Sigmoid colon (tissue), 7 donors: ENCODE measurements at regions of chr5 and their contacts with region 1.

Region 1: DNA sequence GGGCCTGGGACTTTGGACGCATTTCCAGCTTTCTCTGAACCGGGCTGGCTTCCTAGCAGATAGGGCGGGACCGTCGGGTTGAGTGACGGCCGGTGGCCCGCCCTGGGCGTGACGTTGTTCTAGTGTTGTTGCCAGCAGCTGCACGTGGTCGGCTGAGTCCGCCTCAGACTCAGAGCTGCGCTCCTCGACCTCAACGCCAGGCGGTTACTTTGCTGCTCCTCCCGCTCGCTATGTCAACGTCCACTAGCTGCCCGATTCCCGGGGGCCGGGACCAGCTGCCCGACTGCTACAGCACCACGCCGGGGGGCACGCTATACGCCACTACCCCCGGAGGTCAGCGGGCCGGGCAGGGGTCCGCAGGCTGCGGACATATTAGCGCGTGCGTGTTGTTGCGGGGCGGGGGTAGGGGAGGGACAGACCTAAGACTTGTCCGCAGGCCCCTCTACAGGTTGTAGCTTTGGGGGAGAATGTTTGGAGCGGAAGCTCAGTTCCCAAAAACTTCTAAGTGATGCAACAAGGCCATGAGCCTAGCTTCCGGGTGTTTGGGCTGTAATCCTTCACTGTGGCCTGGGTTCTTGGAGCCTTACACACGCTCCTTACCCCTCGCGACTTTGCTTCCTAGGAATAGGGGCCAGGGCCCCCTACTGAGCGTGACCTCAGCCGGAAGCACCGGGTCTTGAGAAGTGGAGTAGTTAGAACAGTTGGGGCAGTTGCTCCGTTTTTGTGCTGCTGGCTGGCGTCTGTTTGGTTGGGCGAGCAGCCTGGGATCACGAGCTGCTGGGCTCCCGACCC is at the start of gene EIF4EBP3:
- DNase-seq: peak; percentile 99
- H3K4me3 ChIP-seq: peak within 1 kb of the TSS; percentile 41 to 58 (median 53)
- H3K27ac ChIP-seq: peak within 1 kb of the TSS; percentile 93 to 98 (median 98)
- H3K4me1 ChIP-seq: peaks cover 0 to 50% (median 43%) of the 10 kb centered on the region in 4 donors
- H3K27me3 ChIP-seq: no peaks in the 10 kb centered on the region
- CTCF ChIP-seq: peak; percentile 68 to 92 (median 92)
- EP300 ChIP-seq: peak in 1 of 4 donors; percentile 52
- POLR2A ChIP-seq: peak; percentile 58 to 81
- total RNA-seq, gene EIF4EBP3: 6.5 to 21.0 (median 12.1) TPM

Region 2: GRCh38 chr5:140401362-140402257 is 146.1 kb before region 1 on chr5 and contains the start of gene ANKHD1:
- intact Hi-C with region 1: loop called (anchors 5 kb)
- DNase-seq: peak; percentile 100
- H3K4me3 ChIP-seq: peak within 1 kb of the TSS; percentile 90 to 98 (median 96)
- H3K27ac ChIP-seq: peak within 1 kb of the TSS; percentile 98 to 99 (median 99)
- H3K4me1 ChIP-seq: peaks cover 0 to 52% (median 43%) of the 10 kb centered on the region in 4 donors
- H3K27me3 ChIP-seq: no peaks in the 10 kb centered on the region
- CTCF ChIP-seq: no peak
- EP300 ChIP-seq: no peak
- POLR2A ChIP-seq: peak; percentile 95 to 96
- total RNA-seq, gene ANKHD1: 93.5 to 109 (median 106) TPM

Region 3: DNA sequence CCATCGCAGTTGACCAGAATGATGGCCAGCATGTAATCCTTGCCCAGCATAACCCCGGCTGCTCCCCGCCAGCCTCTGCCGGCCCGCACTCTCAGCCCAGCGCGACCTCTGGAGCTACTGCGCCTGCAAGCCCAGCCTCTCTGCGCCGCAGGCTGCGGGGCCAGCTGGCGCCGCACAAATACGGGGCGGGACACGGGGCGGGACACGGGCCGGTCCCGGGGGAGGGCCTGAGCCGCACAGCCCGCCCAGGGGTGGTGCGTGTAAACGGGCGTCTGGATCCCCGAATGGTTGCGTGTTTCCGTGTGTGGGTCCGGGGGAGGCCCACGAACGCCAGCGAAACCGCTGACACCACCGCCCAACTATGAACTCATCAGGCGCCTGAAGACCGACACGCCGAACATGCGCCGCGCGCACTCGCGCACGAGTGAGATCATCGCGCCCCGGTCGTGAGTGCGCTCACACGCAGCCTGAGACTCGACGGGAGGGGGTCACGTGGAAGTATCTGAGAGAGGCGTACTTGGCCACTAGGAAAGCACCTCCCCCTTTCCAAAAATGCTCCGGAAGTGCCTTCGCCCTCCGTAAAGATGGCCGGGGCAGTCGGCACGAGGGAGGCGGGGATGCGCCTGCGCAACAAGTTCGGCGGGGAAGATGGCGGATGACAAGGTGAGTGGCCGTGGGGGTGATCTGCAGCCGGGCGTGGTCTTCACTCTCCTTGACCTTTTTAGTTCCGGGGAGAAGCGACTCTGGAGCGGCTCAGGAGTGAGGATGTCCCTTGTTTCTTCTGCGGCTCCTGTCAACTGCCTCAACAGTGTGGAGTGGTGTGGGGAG is 16.7 kb after region 1 on chr5 and contains the starts of genes APBB3 and SLC35A4:
- intact Hi-C with region 1: loop called (anchors 2 kb)
- DNase-seq: peak; percentile 99
- H3K4me3 ChIP-seq: peak within 1 kb of the TSS; percentile 60 to 81 (median 74)
- H3K27ac ChIP-seq: peak within 1 kb of the TSS; percentile 92 to 97 (median 96)
- H3K4me1 ChIP-seq: peaks cover 0 to 54% (median 46%) of the 10 kb centered on the region in 4 donors
- H3K27me3 ChIP-seq: no peaks in the 10 kb centered on the region
- CTCF ChIP-seq: no peak
- EP300 ChIP-seq: peak in 2 of 4 donors; percentile 23 to 77
- POLR2A ChIP-seq: peak; percentile 86 to 88
- total RNA-seq, gene APBB3: 13.5 to 25.9 (median 19.3) TPM
- total RNA-seq, gene SLC35A4: 14.2 to 19.7 (median 17.9) TPM

Region 4: GRCh38 chr5:140639148-140639979 is 91.7 kb after region 1 on chr5 and contains the start of gene TMCO6:
- intact Hi-C with region 1: loop called (anchors 2 kb)
- DNase-seq: peak; percentile 99
- H3K4me3 ChIP-seq: peak within 1 kb of the TSS; percentile 66 to 77 (median 71)
- H3K27ac ChIP-seq: peak within 1 kb of the TSS; percentile 88 to 91 (median 90)
- H3K4me1 ChIP-seq: peaks cover 0 to 18% (median 12%) of the 10 kb centered on the region in 4 donors
- H3K27me3 ChIP-seq: no peaks in the 10 kb centered on the region
- CTCF ChIP-seq: peak; percentile 32 to 63 (median 59)
- EP300 ChIP-seq: peak in 1 of 4 donors; percentile 17
- POLR2A ChIP-seq: peak; percentile 21 to 59
- total RNA-seq, gene TMCO6: 27.3 to 40.2 (median 35.6) TPM

Region 5: GRCh38 chr5:140647042-140647341 is 99.3 kb after region 1 on chr5:
- intact Hi-C with region 1: loop called (anchors 1 kb)
- DNase-seq: no peak
- H3K4me3 ChIP-seq: peak overlapping the region; percentile 79 to 98 (median 85)
- H3K27ac ChIP-seq: peak overlapping the region; percentile 83 to 90 (median 86)
- H3K4me1 ChIP-seq: peaks cover 0 to 38% (median 28%) of the 10 kb centered on the region in 4 donors
- H3K27me3 ChIP-seq: no peaks in the 10 kb centered on the region
- CTCF ChIP-seq: no peak
- EP300 ChIP-seq: no peak
- POLR2A ChIP-seq: no peak

Region 6: DNA sequence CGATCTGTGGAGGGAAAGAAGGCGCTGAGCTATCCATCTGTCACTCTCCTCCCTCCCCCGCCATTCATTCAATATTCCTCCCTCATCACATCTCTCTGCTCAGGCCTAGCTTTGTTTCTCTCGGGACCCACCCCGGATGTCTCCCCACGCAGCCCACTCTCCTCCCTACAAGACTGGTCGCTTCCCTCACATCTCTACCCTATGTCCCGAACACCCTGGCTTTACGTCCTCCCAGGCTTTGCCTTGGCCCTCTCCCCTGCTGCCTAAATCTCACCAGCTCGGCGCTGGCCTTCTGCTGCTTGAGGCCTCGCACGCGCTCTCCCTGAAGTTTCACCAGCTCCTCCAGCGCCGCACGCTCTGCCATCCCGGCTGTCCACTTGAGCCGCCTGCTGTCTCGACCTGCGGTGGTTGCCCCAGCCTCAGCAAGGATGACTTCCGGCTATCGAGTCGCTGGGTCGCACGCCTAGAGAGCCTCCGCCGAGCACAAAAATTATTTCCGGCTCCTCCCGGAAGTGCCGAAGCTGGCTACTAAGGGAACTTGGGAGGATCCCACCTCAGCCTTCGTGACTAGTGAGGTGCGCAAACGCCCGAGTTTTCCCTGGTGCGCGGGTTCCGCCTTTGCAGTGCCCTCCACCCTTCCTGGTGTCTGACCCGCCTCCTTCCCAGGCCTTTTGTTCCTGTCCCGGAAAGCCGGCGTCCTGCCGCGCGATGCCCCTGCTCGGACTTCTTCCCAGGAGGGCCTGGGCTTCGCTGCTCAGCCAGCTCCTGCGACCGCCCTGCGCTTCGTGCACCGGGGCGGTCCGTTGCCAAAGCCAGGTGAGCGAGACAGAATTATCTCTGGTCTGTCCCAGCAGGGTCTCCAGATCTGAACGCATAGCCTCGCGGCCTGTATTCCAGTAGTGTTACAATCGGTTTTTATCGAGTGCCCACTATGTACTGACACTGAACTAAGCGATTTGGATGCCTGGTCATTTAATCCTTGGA is 143.5 kb after region 1 on chr5 and contains the starts of genes HARS1 and HARS2:
- intact Hi-C with region 1: loop called (anchors 5 kb)
- DNase-seq: peak; percentile 93
- H3K4me3 ChIP-seq: peak within 1 kb of the TSS; percentile 48 to 87 (median 76)
- H3K27ac ChIP-seq: peak within 1 kb of the TSS; percentile 80 to 88 (median 83)
- H3K4me1 ChIP-seq: peaks cover 0 to 35% (median 26%) of the 10 kb centered on the region in 4 donors
- H3K27me3 ChIP-seq: no peaks in the 10 kb centered on the region
- CTCF ChIP-seq: no peak
- EP300 ChIP-seq: no peak
- POLR2A ChIP-seq: peak; percentile 44 to 61
- total RNA-seq, gene HARS1: 35.2 to 54.2 (median 43.5) TPM
- total RNA-seq, gene HARS2: 18.2 to 19.4 (median 18.9) TPM

Region 7: GRCh38 chr5:140710899-140711552 is 163.3 kb after region 1 on chr5:
- intact Hi-C with region 1: loop called (anchors 2 kb)
- DNase-seq: peak; percentile 93
- H3K4me3 ChIP-seq: peak overlapping the region; percentile 35 to 61 (median 50)
- H3K27ac ChIP-seq: peak overlapping the region; percentile 74 to 92 (median 86)
- H3K4me1 ChIP-seq: peaks cover 0 to 12% (median 0%) of the 10 kb centered on the region in 4 donors
- H3K27me3 ChIP-seq: no peaks in the 10 kb centered on the region
- CTCF ChIP-seq: no peak
- EP300 ChIP-seq: no peak
- POLR2A ChIP-seq: peak in 1 of 2 donors; percentile 8